Common myeloid progenitor, CD34-positive (primary cell): ENCODE measurements at regions of chr3 and their contacts with region 1.

Region 1: DNA sequence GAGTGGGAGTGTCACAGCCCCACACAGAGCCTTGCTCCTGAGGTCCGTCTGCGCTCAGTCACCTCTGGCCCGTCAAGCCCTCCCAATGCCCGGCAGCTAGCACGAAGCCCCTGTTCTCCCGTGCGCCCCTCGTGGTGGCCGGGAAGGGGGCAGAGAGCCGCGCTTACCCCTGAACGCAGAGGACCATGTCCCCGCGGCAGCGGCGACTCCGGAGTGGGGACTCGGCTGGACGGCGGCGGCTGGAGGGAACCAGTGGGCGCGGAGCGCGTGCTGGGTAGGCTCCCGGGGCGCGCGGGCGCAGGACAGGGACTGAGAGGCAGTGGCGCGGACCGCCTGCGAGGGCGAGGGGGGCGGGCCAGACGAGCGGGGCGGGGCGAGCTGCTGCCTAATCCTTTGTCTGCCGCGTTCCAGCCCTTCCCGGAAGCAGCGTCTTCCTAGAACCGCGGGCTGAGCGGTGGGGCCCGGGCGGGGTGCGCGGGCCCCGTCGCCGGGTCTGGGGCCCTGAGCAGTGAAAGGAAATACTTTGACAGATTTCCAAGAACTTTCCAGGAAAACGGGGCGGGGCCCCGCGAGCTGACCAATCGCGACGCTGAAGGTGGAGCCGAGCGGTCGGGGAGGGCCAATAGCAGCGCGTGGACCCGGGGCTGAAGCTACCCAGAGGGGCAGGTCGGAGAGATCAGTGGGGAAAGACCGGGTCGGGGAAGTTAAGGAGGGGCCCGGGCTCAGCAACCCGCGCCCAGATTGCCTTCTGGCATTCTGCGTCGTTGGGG is at the start of gene CISH:
- DNase-seq: peak; percentile 89 to 96 (median 95)
- H3K4me3 ChIP-seq: peak within 1 kb of the TSS; percentile 70 to 92 (median 78)
- H3K27ac ChIP-seq: peak within 1 kb of the TSS; percentile 61 to 92
- H3K4me1 ChIP-seq: peaks cover 21 to 80% (median 78%) of the 10 kb centered on the region in 4 experiments
- H3K27me3 ChIP-seq: no peaks in the 10 kb centered on the region

Region 2: DNA sequence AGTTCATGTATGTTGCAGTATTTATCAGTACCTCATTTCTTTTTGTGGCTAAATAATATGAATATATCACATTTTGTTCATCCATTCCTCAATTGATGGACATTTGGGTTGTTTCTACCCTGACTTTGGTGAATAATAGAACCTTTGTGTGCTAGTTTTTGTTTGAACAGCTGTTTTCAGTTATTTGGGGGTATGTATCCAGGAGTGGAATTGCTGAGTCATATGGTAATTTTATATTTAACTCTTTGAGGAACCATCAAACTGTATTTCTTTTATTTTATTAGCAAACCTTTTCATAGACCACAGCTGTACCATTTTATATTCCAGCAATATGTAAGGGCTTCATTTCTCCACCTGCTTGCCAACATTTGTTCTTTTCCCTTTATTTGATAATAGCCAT is 561.3 kb before region 1 on chr3:
- CTCF ChIA-PET with region 1: no interaction called
- POLR2A ChIA-PET with region 1: no interaction called
- DNase-seq: peak in 2 of 3 donors; percentile 64 to 74
- H3K4me3 ChIP-seq: no peak overlapping the region
- H3K27ac ChIP-seq: no peak overlapping the region
- H3K4me1 ChIP-seq: peaks cover 3 to 10% (median 6%) of the 10 kb centered on the region in 4 experiments
- H3K27me3 ChIP-seq: no peaks in the 10 kb centered on the region

Region 3: DNA sequence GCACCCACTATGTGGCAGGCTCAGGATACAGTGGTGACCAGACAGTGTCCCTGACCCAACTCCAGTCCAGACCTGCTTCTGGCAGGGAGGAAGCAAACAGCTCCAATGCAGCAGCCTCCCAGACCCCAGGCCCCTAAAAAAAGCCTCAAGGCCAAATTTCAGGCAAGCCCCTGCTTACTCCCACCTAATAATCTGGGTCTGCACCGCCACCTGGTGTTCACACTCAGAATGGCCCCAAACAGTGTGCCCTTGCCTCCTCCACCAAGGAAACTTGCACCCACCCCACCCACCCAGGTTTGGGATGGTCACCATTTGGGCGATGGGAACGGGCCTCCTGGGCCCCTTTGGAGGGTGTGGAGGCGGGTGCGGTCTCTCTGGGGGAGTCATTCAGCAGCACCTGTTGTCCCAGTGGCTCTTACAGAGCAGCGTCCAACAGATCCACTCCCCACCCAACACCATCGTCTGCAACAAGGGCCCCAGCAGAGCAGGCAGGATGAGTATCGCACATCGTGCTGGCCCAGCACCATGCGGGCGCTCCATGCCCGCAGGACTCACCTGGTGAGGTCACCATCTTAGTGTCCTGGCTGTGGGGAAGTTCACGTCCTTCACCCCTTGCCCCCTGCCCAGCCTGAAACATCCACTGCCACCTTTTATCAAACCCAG is 61.4 kb before region 1 on chr3:
- CTCF ChIA-PET with region 1: interaction called, 39 read pairs
- POLR2A ChIA-PET with region 1: no interaction called
- DNase-seq: peak; percentile 63 to 74 (median 64)
- H3K4me3 ChIP-seq: no peak overlapping the region
- H3K27ac ChIP-seq: no peak overlapping the region
- H3K4me1 ChIP-seq: peaks cover 0 to 6% (median 1%) of the 10 kb centered on the region in 4 experiments
- H3K27me3 ChIP-seq: no peaks in the 10 kb centered on the region

Region 4: DNA sequence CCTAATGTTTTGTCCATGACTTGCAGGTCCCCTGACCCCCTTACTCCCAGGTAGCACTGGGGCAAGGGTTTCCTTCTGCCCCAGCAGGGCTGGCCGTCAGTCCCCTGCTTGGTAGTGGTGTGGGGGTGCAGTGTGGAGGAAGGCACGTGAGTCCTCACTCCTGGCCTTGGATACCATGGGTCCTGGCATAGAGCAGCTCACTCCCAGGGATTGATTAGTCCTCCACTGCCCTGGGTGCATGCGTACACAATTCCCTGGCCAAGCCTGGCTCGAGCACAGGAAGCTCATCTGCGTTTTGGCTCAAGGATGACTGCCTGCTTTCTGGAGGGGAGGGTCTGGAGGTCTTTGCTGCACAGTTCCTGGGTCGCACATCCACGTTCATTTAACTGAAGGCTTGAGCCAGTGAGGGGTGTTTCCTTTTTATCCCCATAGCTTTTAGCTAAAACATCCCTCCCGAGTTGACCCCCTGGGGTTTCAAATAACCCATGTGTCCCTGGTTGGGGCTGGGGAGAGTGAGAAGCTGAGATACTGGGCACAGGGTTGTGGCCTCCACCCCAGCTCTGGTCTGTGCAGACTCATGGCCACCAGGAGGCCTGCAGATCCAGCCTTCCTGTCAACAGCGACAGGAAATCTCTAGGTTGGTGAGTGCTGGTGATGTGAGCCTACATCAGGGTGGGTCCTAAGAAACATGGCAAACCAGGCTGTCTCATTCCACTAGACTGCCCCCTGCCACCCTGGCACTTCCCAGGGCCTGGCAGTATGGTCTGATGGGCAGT is 30.8 kb before region 1 on chr3:
- CTCF ChIA-PET with region 1: interaction called, 799 read pairs
- POLR2A ChIA-PET with region 1: no interaction called
- DNase-seq: no peak
- H3K4me3 ChIP-seq: no peak overlapping the region
- H3K27ac ChIP-seq: no peak overlapping the region
- H3K4me1 ChIP-seq: peaks cover 0 to 14% (median 5%) of the 10 kb centered on the region in 4 experiments
- H3K27me3 ChIP-seq: no peaks in the 10 kb centered on the region

Region 5: DNA sequence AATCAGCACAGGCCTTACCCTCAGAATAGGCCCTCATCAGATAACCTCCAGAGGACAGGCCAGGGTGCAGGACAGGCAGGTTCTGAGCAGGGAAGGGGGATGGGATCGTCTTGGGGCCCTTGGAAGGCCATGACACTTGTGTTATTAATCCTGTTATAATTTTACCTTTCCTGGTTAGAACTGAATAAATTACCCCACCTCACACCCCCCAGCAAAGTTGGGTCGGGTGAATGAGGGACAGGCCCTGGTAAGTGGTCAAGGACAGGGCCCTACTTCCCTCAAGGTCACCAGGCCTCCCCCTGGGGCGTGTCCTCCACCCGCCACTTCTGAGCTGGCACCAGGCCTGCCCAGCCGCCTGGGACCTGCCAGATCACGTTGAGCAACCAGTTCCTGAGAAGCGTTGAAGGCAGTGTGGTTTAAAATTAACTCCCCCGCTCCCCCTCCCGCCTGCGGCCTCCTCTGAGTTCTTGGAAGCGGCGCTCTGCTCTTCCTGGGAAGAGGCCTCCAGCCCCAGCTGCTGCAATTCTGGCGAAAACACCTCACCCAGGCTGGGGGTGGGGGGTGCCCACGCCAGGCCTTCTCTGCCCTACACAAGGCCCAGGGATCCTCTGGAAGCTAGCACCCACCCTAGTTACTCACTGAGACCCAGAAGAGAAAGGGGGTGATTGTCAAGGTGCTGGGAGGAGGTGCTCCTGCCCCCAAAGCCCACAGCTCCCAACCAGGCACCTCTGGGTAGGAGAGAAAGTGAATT is 10.6 kb before region 1 on chr3:
- CTCF ChIA-PET with region 1: interaction called, 81 read pairs
- POLR2A ChIA-PET with region 1: interaction called, 12 read pairs
- DNase-seq: peak; percentile 66 to 87 (median 80)
- H3K4me3 ChIP-seq: peak overlapping the region in 4 of 7 experiments; percentile 33 to 48 (median 38)
- H3K27ac ChIP-seq: peak overlapping the region; percentile 66 to 92
- H3K4me1 ChIP-seq: peaks cover 7 to 85% (median 74%) of the 10 kb centered on the region in 4 experiments
- H3K27me3 ChIP-seq: no peaks in the 10 kb centered on the region

Region 6: DNA sequence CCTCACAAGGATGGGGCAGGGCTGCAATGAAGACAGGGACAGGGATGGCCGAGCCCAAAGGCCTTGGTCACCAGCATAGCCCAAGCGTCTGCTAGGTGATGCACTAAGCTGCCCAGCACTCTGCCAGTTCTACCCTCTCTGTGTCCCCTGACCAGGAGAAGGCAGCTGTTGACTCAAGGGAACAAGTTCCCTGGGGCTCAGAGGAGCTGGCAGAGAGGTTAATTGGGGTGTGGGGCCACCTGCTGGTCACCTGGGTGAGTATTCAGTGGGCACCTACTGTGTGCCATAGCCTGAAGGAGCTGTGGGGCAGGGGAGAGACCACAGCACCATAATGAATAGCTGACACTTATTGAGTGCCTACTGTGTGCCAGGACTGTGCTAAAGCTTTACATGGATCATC is 41.1 kb after region 1 on chr3:
- CTCF ChIA-PET with region 1: interaction called, 101 read pairs
- POLR2A ChIA-PET with region 1: interaction called, 5 read pairs
- DNase-seq: peak; percentile 22 to 51 (median 45)
- H3K4me3 ChIP-seq: no peak overlapping the region
- H3K27ac ChIP-seq: no peak overlapping the region
- H3K4me1 ChIP-seq: peaks cover 0 to 2% (median 0%) of the 10 kb centered on the region in 4 experiments
- H3K27me3 ChIP-seq: no peaks in the 10 kb centered on the region

Region 7: GRCh38 chr3:51031666-51032065 is 420.0 kb after region 1 on chr3:
- CTCF ChIA-PET with region 1: no interaction called
- POLR2A ChIA-PET with region 1: no interaction called
- DNase-seq: no peak
- H3K4me3 ChIP-seq: no peak overlapping the region
- H3K27ac ChIP-seq: no peak overlapping the region
- H3K4me1 ChIP-seq: no peaks in the 10 kb centered on the region
- H3K27me3 ChIP-seq: no peaks in the 10 kb centered on the region

Region 8: GRCh38 chr3:51379301-51379700 is 767.7 kb after region 1 on chr3:
- CTCF ChIA-PET with region 1: interaction called, 22 read pairs
- POLR2A ChIA-PET with region 1: interaction called, 3 read pairs
- DNase-seq: peak; percentile 71 to 99 (median 97)
- H3K4me3 ChIP-seq: peak overlapping the region in 4 of 7 experiments; percentile 14 to 55 (median 34)
- H3K27ac ChIP-seq: peak overlapping the region in 1 of 2 experiments; percentile 60
- H3K4me1 ChIP-seq: peaks cover 15 to 76% (median 70%) of the 10 kb centered on the region in 4 experiments
- H3K27me3 ChIP-seq: no peaks in the 10 kb centered on the region

Region 9: GRCh38 chr3:51391075-51391567 is 779.5 kb after region 1 on chr3 and contains the start of gene RBM15B:
- CTCF ChIA-PET with region 1: interaction called, 18 read pairs
- POLR2A ChIA-PET with region 1: no interaction called
- DNase-seq: peak; percentile 96 to 98 (median 98)
- H3K4me3 ChIP-seq: peak within 1 kb of the TSS; percentile 62 to 82 (median 76)
- H3K27ac ChIP-seq: peak within 1 kb of the TSS; percentile 56 to 78
- H3K4me1 ChIP-seq: peaks cover 7 to 79% (median 64%) of the 10 kb centered on the region in 4 experiments
- H3K27me3 ChIP-seq: no peaks in the 10 kb centered on the region